ENCODE measurements at regions of chr19 and their contacts with region 1.

Region 1: GRCh38 chr19:47035127-47036096 is 13.0 kb downstream of the TMEM160 start:
- DNase-seq: peak; percentile 69 to 93 (median 88)
- H3K4me3 ChIP-seq: peak overlapping the region; percentile 34 to 70 (median 52)
- H3K27ac ChIP-seq: peak overlapping the region in 46 of 59 donors; percentile 2 to 83 (median 66)
- H3K27me3 ChIP-seq: peaks cover 0 to 12% (median 0%) of the 10 kb centered on the region in 45 donors
- CTCF ChIP-seq: peak; percentile 87 to 99 (median 97)

Region 2: GRCh38 chr19:47013041-47013517 is 22.3 kb before region 1 on chr19:
- intact Hi-C with region 1: loop called in 1 of 2 experiments (anchors 2 kb)
- DNase-seq: peak; percentile 76 to 88 (median 82)
- H3K4me3 ChIP-seq: peak overlapping the region in 14 of 59 donors; percentile 0 to 27 (median 12)
- H3K27ac ChIP-seq: peak overlapping the region in 8 of 59 donors; percentile 2 to 47 (median 18)
- H3K27me3 ChIP-seq: no peaks in the 10 kb centered on the region
- CTCF ChIP-seq: peak; percentile 91 to 100 (median 98)

Region 3: GRCh38 chr19:47081111-47081510 is 45.7 kb after region 1 on chr19:
- intact Hi-C with region 1: no loop called
- DNase-seq: no peak
- H3K4me3 ChIP-seq: no peak overlapping the region
- H3K27ac ChIP-seq: peak overlapping the region in 4 of 59 donors; percentile 1 to 66 (median 19)
- H3K27me3 ChIP-seq: no peaks in the 10 kb centered on the region
- CTCF ChIP-seq: no peak

Region 4: DNA sequence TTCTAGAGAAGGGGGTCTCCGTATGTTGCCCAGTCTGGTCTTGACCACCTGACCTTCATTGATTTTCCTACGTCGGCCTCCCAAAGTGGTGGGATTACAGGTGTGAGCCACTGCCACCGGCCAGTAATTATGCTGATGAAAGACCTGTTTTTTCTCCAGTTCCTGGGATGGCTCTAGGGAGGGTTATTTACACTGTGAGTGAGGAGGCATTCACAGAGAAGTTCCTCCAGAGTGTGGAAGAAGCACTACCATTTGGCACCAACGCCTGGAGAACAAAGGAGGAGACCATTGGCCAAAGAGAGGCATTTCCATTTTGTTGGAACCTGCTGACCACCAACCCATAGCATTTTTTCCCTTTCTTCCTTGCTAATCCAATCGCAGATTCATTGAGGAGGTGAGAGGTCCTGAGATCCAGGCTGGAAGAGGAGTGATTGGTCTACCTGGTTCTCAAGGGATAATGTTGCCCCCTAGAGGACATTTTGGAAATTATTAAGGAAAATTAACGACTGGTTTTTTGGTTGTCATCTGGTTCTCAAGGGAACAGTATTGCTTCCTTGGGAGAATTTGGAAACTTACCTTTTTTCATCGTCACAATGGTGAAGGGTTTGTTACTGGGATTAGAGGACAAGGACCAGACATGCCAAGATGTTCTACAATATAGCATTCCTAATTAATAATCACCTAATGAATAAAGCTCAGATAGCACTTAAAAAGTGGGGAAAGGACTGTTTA is 89.7 kb after region 1 on chr19:
- intact Hi-C with region 1: loop called (anchors 5 kb)
- DNase-seq: no peak
- H3K4me3 ChIP-seq: no peak overlapping the region
- H3K27ac ChIP-seq: no peak overlapping the region
- H3K27me3 ChIP-seq: no peaks in the 10 kb centered on the region
- CTCF ChIP-seq: peak; percentile 62 to 92 (median 78)

Region 5: DNA sequence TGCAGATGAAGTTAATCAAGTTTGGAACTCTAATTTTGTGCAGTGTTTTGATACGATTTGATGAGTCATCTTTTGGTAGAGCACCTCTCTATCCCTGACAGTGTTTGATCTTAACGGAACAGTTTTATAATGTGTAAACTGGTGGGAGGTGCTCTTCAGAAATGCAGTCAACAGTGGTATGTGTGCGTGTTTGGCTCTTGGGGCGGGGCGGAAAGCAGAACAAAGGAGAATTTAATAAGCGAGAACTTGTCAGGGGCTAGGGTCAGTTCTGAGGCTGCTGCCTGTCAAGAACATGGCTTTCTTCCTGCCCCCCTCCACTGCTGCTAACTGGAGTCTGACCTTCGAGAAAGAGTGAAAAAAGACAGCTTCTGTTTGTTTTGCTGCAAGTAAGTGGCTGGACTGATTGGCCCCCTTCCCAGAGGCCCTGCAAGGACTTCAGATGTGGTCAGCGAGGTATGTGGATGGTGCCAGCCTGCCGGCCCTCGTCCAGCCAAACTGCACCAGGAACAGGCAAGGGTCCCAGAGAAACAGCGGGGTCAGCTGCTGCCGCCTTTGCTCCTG is 154.8 kb after region 1 on chr19:
- intact Hi-C with region 1: no loop called
- DNase-seq: peak in 9 of 10 donors; percentile 23 to 72 (median 49)
- H3K4me3 ChIP-seq: peak overlapping the region in 12 of 59 donors; percentile 3 to 33 (median 14)
- H3K27ac ChIP-seq: peak overlapping the region in 48 of 59 donors; percentile 2 to 81 (median 53)
- H3K27me3 ChIP-seq: no peaks in the 10 kb centered on the region
- CTCF ChIP-seq: no peak

Region 6: GRCh38 chr19:47471733-47472457 is 436.5 kb after region 1 on chr19 and contains the start of gene SLC8A2:
- intact Hi-C with region 1: no loop called
- DNase-seq: peak in 9 of 10 donors; percentile 40 to 91 (median 66)
- H3K4me3 ChIP-seq: peak within 1 kb of the TSS; percentile 10 to 75 (median 60)
- H3K27ac ChIP-seq: peak within 1 kb of the TSS in 54 of 59 donors; percentile 10 to 96 (median 75)
- H3K27me3 ChIP-seq: peaks cover 0 to 9% (median 0%) of the 10 kb centered on the region in 45 donors
- CTCF ChIP-seq: no peak
- total RNA-seq, gene SLC8A2: 22.2 to 179 (median 105) TPM

Measured in dorsolateral prefrontal cortex (tissue), 120 donors.